ENCODE measurements at regions of chr7 and their contacts with region 1.

Region 1: GRCh38 chr7:35906191-35906908 is 105.5 kb downstream of the SEPTIN7 start:
- DNase-seq: peak; percentile 82
- H3K4me3 Mint-ChIP-seq: no peak overlapping the region
- H3K27ac Mint-ChIP-seq: no peak overlapping the region
- H3K4me1 Mint-ChIP-seq: no peaks in the 10 kb centered on the region
- H3K27me3 Mint-ChIP-seq: no peaks in the 10 kb centered on the region
- CTCF ChIP-seq: peak; percentile 87

Region 2: DNA sequence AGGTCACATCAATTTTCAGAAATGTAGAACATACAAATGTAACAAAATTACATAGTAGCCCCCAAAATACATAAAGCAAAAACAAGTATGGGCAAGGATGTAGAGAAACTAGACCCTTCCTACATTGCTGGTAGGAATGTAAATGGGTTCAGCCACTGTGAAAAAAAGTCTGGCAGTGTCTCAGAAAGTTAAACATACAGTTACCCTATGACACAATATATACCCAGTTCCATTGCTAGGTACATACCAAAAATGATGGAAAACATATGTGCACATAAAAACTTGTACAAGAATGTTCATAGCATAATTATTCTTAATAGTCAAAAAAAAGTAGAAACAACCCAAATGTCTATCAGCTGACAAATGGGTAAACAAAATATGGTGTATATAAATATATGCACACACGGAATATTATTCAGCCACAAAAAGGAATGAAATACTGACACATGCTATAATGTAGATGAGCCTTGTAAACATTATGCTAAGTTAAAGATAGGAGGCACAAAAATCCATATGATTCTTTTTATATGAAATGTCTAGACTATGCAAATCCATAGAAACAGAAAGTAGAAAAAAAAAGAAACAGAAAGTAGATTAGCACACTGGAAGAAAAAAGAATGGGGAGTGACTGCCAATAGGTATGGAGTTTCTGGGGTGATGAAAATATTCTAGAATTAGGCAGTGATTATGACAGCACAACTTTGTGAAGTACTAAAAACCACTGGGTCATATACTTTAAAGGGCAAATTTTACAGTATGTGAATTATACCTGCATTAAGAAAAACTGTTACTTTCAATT is 224.9 kb before region 1 on chr7:
- CTCF ChIA-PET with region 1: no interaction called
- POLR2A ChIA-PET with region 1: no interaction called
- intact Hi-C with region 1: no loop called
- DNase-seq: no peak
- H3K4me3 Mint-ChIP-seq: no peak overlapping the region
- H3K27ac Mint-ChIP-seq: no peak overlapping the region
- H3K4me1 Mint-ChIP-seq: peaks cover 18% of the 10 kb centered on the region
- H3K27me3 Mint-ChIP-seq: no peaks in the 10 kb centered on the region
- CTCF ChIP-seq: no peak

Region 3: GRCh38 chr7:35694781-35695472 is 211.4 kb before region 1 on chr7 and contains the start of gene HERPUD2:
- CTCF ChIA-PET with region 1: interaction called, 18 read pairs
- POLR2A ChIA-PET with region 1: interaction called, 3 read pairs
- intact Hi-C with region 1: no loop called
- DNase-seq: peak; percentile 94
- H3K4me3 Mint-ChIP-seq: peak within 1 kb of the TSS; percentile 93
- H3K27ac Mint-ChIP-seq: peak within 1 kb of the TSS; percentile 96
- H3K4me1 Mint-ChIP-seq: peaks cover 29% of the 10 kb centered on the region
- H3K27me3 Mint-ChIP-seq: no peaks in the 10 kb centered on the region
- CTCF ChIP-seq: no peak
- total RNA-seq, gene HERPUD2: 28.1 and 29.0 TPM in 2 replicates

Region 4: DNA sequence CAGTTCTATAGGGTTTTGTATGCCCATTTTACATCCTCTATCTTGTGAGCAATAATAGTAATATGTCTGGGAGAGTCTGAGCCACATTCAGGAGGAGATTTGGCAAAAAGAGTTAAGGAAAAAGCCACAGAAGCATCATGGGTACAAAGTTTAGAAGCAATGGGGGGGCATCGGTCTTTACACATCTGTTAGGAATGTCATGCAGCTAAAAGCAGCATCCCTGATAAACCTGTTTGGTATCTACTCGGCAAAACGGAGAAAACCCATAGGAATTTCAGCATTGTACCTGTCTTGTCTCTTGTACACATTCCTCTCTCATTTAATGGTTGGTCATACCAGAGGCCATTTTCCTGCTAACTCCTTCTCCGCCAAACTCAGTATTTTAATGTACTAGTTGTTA is 198.9 kb before region 1 on chr7:
- CTCF ChIA-PET with region 1: interaction called, 56 read pairs
- POLR2A ChIA-PET with region 1: interaction called, 5 read pairs
- intact Hi-C with region 1: loop called (anchors 1 kb)
- DNase-seq: no peak
- H3K4me3 Mint-ChIP-seq: no peak overlapping the region
- H3K27ac Mint-ChIP-seq: no peak overlapping the region
- H3K4me1 Mint-ChIP-seq: peaks cover 5% of the 10 kb centered on the region
- H3K27me3 Mint-ChIP-seq: no peaks in the 10 kb centered on the region
- CTCF ChIP-seq: no peak

Region 5: GRCh38 chr7:35714862-35715261 is 191.5 kb before region 1 on chr7:
- CTCF ChIA-PET with region 1: interaction called, 56 read pairs
- POLR2A ChIA-PET with region 1: interaction called, 5 read pairs
- intact Hi-C with region 1: no loop called
- DNase-seq: no peak
- H3K4me3 Mint-ChIP-seq: no peak overlapping the region
- H3K27ac Mint-ChIP-seq: no peak overlapping the region
- H3K4me1 Mint-ChIP-seq: peaks cover 5% of the 10 kb centered on the region
- H3K27me3 Mint-ChIP-seq: no peaks in the 10 kb centered on the region
- CTCF ChIP-seq: no peak

Region 6: DNA sequence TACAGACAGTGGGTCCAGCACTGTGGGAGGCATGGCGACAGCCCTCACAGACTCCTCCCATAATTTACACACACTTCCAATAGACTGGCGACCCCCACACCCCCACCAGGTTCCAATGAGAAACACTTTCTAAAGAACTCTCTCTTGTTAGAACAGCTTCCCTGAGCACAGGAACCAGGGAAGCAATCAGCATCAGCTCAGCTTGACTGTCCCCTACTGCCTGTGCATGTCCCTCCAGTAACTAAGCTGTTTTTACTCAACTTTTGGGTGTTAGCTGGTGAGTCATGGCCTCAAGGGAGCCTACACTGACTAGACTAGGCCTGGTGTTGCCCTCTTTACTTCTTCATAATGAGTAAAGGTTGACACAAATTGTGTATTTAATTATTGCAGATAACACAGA is 178.8 kb before region 1 on chr7:
- CTCF ChIA-PET with region 1: interaction called, 10 read pairs
- POLR2A ChIA-PET with region 1: no interaction called
- intact Hi-C with region 1: no loop called
- DNase-seq: peak; percentile 30
- H3K4me3 Mint-ChIP-seq: no peak overlapping the region
- H3K27ac Mint-ChIP-seq: no peak overlapping the region
- H3K4me1 Mint-ChIP-seq: no peaks in the 10 kb centered on the region
- H3K27me3 Mint-ChIP-seq: no peaks in the 10 kb centered on the region
- CTCF ChIP-seq: no peak

Region 7: DNA sequence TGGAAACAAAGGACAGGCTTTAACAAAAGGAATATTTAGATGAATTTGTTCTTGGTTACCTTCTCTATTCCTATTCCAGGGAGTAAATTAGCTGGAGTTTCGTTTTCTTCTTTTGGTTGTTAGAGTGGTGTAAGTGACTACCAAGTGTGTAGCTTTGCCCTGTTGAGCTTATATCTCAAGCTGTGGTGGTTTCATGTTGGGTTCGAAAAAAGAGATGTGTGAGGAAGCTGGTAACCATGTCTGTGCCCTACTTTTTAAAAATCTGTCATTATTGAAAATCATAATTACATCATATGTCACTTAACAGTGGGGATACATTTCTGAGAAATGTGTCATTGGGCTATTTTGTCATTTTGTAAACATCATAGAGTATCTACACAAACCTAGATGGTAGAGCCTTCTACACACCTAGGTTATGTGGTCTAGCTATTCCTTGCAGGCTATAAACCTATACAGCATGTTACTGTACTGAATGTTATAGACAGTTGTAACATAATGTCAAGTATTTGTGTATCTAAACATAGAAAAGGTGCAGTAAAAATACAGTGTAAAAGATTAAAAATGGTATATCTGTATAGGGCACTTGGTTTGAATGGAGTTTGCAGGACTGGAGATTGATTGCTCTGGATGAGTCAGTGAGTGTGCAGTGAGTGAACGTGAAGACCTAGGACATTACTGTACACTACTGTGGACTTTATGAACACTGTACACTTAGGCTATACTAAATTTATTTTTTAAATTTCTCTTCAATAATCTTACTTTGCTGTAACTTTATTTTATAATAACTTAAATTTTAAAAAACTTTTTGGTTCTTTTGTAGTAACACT is 15.1 kb before region 1 on chr7:
- CTCF ChIA-PET with region 1: interaction called, 11 read pairs
- POLR2A ChIA-PET with region 1: no interaction called
- intact Hi-C with region 1: no loop called
- DNase-seq: no peak
- H3K4me3 Mint-ChIP-seq: no peak overlapping the region
- H3K27ac Mint-ChIP-seq: no peak overlapping the region
- H3K4me1 Mint-ChIP-seq: peaks cover 5% of the 10 kb centered on the region
- H3K27me3 Mint-ChIP-seq: no peaks in the 10 kb centered on the region
- CTCF ChIP-seq: no peak